ENCODE measurements at regions of chr1 and their contacts with region 1.

Region 1: DNA sequence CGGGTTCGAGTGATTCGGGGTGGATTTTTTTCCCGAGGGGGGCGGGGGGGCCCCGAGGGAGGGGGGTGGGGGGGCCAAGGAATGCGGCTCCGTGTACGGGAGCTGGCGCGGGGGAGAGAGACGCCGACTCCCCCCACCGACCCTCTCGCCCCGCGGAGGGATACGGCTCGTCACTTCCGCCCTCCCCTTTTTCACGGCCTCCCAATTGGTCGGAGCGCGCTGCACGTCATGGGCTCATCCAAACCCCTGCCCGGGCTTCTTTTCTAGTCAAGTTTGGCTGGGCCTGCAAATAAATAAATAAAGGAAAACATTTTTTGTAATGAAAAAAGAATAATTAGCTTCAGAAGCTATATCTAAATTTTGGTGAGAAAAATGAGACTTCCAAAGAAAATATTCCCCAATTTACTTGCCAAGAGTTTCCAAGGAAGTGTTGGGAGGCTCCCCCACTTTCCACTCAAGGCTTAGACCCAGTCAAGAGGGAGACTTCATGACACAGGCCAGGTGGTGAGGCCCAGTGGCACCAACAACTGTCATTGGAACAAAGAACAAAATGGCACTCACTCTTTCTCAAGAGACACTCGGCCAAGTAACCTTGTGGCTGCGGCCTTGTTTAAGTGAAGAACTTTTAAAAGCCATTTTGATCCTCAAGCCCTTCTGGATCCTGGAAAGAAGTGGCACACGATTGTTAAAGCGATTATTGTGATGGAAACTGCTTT is at the start of gene POGZ:
- DNase-seq: peak; percentile 92
- CTCF ChIP-seq: no peak

Region 2: DNA sequence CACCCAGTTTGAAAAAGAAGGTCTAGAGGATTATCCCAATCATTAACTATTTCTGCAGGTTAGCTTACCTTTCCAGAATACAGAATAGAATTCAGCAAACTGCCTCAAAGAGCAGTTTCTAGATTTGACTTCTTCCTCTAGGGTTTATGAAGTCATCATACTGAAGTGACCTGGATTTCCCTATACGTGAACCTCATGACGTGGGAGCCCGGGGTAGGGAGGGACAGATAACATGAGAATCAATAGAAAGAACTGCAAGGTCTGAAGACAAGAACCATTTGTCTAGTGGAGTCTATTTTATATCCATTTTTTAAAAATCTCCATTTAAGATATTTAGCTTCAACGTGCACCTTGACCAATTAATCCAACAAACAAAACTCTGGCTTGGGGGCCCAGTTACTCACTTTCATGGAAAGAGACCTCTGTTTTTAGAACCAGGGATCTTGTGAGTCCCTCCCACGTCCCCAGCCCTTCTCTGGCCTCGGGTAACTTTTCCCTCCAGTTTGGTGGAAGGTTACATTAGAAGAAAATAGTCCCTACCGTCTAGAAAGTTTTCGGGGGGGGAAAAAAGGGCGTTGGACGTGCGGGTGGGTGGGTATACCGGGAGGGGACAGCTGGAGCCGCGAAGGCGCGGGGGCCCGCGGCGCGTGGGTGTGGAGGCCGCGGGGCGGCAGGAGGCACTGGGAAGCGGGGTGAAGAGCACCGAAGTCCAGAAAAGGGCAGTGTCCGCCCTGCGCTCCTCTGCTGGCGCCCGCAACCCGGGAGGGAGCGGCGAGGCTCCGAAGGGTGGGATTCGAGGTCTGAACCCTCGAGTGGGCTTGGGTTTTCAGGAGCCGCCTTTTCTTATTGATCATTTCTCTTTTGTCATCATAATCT is 13.6 kb after region 1 on chr1:
- CTCF ChIA-PET with region 1: interaction called, 50 read pairs
- POLR2A ChIA-PET with region 1: interaction called, 4 read pairs
- DNase-seq: peak; percentile 54
- CTCF ChIP-seq: no peak

Region 3: GRCh38 chr1:152252157-152252556 is 792.7 kb after region 1 on chr1:
- CTCF ChIA-PET with region 1: no interaction called
- POLR2A ChIA-PET with region 1: no interaction called
- DNase-seq: no peak
- CTCF ChIP-seq: no peak

Measured in GM10248 (cell line).